ENCODE measurements at regions of chrX and their contacts with region 1.

Region 1: GRCh38 chrX:13898083-13898482 is 81.2 kb upstream of the GPM6B start:
- DNase-seq: peak; percentile 41
- H3K4me3 ChIP-seq: no peak overlapping the region
- H3K27ac ChIP-seq: peak overlapping the region; percentile 94
- H3K4me1 ChIP-seq: peaks cover 38% of the 10 kb centered on the region
- H3K27me3 ChIP-seq: no peaks in the 10 kb centered on the region
- CTCF ChIP-seq: peak; percentile 52 to 62

Region 2: DNA sequence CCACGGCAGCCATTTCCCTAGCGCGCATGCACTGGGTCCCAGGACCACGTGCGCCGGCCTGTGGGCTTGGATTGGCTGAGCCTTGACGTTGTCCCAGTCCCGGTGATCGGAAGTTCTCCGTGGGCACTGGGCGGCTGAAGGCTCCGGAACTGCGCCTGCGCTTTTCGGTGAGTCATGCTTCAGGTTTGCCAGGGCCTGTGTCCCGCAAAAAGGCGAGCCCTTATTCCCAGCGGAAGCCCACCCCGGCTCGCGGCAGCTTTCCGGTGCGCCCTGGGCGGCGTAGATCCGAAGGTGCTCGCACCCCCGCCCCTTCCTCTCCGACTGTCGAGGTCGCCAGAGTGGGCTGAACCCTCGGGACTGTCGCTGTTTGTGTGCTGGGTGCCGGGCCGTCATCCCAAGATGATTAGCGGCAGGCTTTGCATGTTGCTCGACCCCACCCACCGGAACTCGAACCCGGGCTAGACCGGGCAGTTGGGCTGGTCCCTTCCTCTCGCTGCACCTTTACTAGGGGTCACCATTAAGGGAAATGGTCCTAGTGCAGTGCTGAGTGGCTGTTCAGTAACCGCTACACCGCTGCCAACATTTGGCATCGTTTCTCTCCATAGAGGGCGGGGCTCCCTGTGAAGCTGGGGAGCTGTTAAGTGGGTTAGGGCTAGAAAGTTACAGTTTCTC is 244.9 kb before region 1 on chrX and contains the start of gene TCEANC:
- CTCF ChIA-PET with region 1: interaction called, 3 read pairs
- dilution Hi-C with region 1: no loop called
- in situ Hi-C with region 1: no loop called
- intact Hi-C with region 1: loop called (anchors 10 kb)
- DNase-seq: peak; percentile 98
- H3K4me3 ChIP-seq: peak within 1 kb of the TSS; percentile 54 to 74 (median 70)
- H3K27ac ChIP-seq: peak within 1 kb of the TSS; percentile 82
- H3K4me1 ChIP-seq: peaks cover 11% of the 10 kb centered on the region
- H3K27me3 ChIP-seq: no peaks in the 10 kb centered on the region
- CTCF ChIP-seq: no peak
- total RNA-seq, gene TCEANC: 3.9 to 4.2 TPM

Region 3: GRCh38 chrX:13923845-13924244 is 25.8 kb after region 1 on chrX:
- CTCF ChIA-PET with region 1: no interaction called
- dilution Hi-C with region 1: no loop called
- in situ Hi-C with region 1: no loop called
- intact Hi-C with region 1: loop called (anchors 2 kb)
- DNase-seq: peak; percentile 78
- H3K4me3 ChIP-seq: no peak overlapping the region
- H3K27ac ChIP-seq: no peak overlapping the region
- H3K4me1 ChIP-seq: no peaks in the 10 kb centered on the region
- H3K27me3 ChIP-seq: no peaks in the 10 kb centered on the region
- CTCF ChIP-seq: peak in 1 of 2 donors; percentile 60

Region 4: GRCh38 chrX:13938051-13938828 is 40.2 kb after region 1 on chrX:
- CTCF ChIA-PET with region 1: no interaction called
- dilution Hi-C with region 1: no loop called
- in situ Hi-C with region 1: no loop called
- intact Hi-C with region 1: loop called (anchors 5 kb)
- DNase-seq: no peak
- H3K4me3 ChIP-seq: peak overlapping the region; percentile 63 to 66 (median 65)
- H3K27ac ChIP-seq: no peak overlapping the region
- H3K4me1 ChIP-seq: peaks cover 30% of the 10 kb centered on the region
- H3K27me3 ChIP-seq: no peaks in the 10 kb centered on the region
- CTCF ChIP-seq: no peak